PC-9 (cell line): ENCODE measurements at regions of chr7 and their contacts with region 1.

Region 1: GRCh38 chr7:152395112-152395511 is 40.7 kb downstream of the KMT2C start:
- DNase-seq: no peak
- H3K4me3 ChIP-seq: no peak overlapping the region
- H3K27ac ChIP-seq: no peak overlapping the region
- H3K4me1 ChIP-seq: no peaks in the 10 kb centered on the region
- H3K27me3 ChIP-seq: no peaks in the 10 kb centered on the region
- CTCF ChIP-seq: no peak

Region 2: GRCh38 chr7:152411389-152411788 is 16.3 kb after region 1 on chr7:
- CTCF ChIA-PET with region 1: interaction called, 11 read pairs
- POLR2A ChIA-PET with region 1: no interaction called
- intact Hi-C with region 1: no loop called
- DNase-seq: no peak
- H3K4me3 ChIP-seq: no peak overlapping the region
- H3K27ac ChIP-seq: no peak overlapping the region
- H3K4me1 ChIP-seq: no peaks in the 10 kb centered on the region
- H3K27me3 ChIP-seq: no peaks in the 10 kb centered on the region
- CTCF ChIP-seq: no peak

Region 3: DNA sequence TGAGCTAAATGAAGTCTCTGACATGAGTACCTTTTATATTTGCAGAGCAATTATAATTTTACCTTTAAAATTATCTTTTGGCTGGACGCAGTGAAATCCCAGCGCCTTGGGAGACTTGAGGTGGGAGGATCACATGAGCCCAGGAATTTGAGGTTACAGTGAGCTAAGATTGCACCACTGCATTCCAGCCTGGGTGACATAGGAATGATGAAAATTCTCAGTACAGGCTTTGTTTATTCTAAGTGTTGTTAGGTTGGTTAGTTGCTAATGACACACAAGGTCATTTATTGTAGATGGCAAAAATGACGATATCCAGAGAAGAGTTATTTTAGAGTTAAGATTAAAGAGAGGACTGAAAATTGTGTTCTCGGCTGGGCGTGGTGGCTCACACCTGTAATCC is 193.2 kb after region 1 on chr7:
- CTCF ChIA-PET with region 1: no interaction called
- POLR2A ChIA-PET with region 1: no interaction called
- intact Hi-C with region 1: no loop called
- DNase-seq: peak; percentile 61 to 88
- H3K4me3 ChIP-seq: no peak overlapping the region
- H3K27ac ChIP-seq: no peak overlapping the region
- H3K4me1 ChIP-seq: peaks cover 14% of the 10 kb centered on the region
- H3K27me3 ChIP-seq: no peaks in the 10 kb centered on the region
- CTCF ChIP-seq: no peak